Ovary (tissue), 10 donors: ENCODE measurements at regions of chr3 and their contacts with region 1.

Region 1: GRCh38 chr3:63818281-63819150 is 583 bp upstream of the C3orf49 start:
- DNase-seq: peak; percentile 26 to 69 (median 52)
- H3K4me3 ChIP-seq: no peak overlapping the region
- H3K27ac ChIP-seq: no peak overlapping the region
- H3K4me1 ChIP-seq: no peaks in the 10 kb centered on the region
- H3K27me3 ChIP-seq: no peaks in the 10 kb centered on the region
- CTCF ChIP-seq: peak; percentile 61 to 68 (median 61)
- EP300 ChIP-seq: no peak
- POLR2A ChIP-seq: no peak

Region 2: GRCh38 chr3:62622553-62623193 is 1195.8 kb before region 1 on chr3:
- intact Hi-C with region 1: loop called in 1 of 4 experiments (anchors 5 kb)
- DNase-seq: peak in 2 of 5 donors; percentile 18
- H3K4me3 ChIP-seq: no peak overlapping the region
- H3K27ac ChIP-seq: no peak overlapping the region
- H3K4me1 ChIP-seq: no peaks in the 10 kb centered on the region
- H3K27me3 ChIP-seq: no peaks in the 10 kb centered on the region
- CTCF ChIP-seq: peak; percentile 48 to 54 (median 52)
- EP300 ChIP-seq: no peak
- POLR2A ChIP-seq: no peak

Region 3: GRCh38 chr3:63349583-63350521 is 468.7 kb before region 1 on chr3:
- intact Hi-C with region 1: loop called (anchors 5 to 10 kb)
- DNase-seq: peak in 3 of 5 donors; percentile 15 to 28 (median 20)
- H3K4me3 ChIP-seq: no peak overlapping the region
- H3K27ac ChIP-seq: no peak overlapping the region
- H3K4me1 ChIP-seq: no peaks in the 10 kb centered on the region
- H3K27me3 ChIP-seq: no peaks in the 10 kb centered on the region
- CTCF ChIP-seq: peak in 1 of 3 donors; percentile 42
- EP300 ChIP-seq: no peak
- POLR2A ChIP-seq: no peak